ENCODE measurements at regions of chr15 and their contacts with region 1.

Region 1: GRCh38 chr15:77543159-77543882 is 89.4 kb downstream of the LINGO1 start:
- DNase-seq: peak; percentile 79
- H3K4me3 Mint-ChIP-seq: peak overlapping the region; percentile 66
- H3K27ac Mint-ChIP-seq: no peak overlapping the region
- H3K4me1 Mint-ChIP-seq: peaks cover 8% of the 10 kb centered on the region
- H3K27me3 Mint-ChIP-seq: no peaks in the 10 kb centered on the region

Region 2: GRCh38 chr15:77107531-77108355 is 435.6 kb before region 1 on chr15:
- CTCF ChIA-PET with region 1: interaction called, 30 read pairs
- POLR2A ChIA-PET with region 1: no interaction called
- DNase-seq: peak; percentile 56
- H3K4me3 Mint-ChIP-seq: no peak overlapping the region
- H3K27ac Mint-ChIP-seq: no peak overlapping the region
- H3K4me1 Mint-ChIP-seq: no peaks in the 10 kb centered on the region
- H3K27me3 Mint-ChIP-seq: no peaks in the 10 kb centered on the region

Region 3: DNA sequence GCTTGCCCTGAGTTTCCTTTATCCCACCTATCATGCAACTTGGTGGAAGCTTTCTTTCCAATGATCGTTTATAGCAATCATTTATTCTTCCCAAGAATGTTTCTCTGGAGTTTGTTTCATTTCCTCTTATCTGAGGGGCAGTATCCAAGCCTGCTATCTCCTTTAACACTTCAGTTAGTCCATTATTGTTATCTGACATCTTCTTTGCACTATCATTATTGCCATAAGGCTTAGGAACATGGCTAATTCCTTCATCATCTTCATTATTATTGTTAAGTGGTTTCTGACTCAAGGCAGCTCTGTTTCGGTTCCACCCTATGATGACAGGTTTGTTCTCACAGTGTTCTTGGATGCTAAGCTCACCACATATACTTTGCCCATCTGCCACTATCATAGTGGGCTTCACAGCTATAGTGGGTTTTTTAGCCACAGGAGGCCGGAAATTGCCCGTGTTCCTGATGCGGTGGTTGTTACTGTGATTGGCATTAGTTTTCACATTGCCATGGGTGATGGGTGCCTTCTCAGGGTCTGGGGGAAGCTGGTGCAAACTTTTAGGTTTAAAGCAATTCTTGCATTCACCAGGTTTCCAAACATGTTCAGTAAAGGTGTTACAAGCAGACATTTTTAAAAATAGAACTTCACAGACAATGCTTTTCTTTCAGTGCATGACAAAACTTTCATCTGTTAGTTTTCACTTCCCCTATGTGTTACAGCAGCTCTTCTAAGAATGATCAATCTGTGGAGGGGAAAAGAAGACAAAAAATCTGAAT is 361.8 kb before region 1 on chr15:
- CTCF ChIA-PET with region 1: interaction called, 38 read pairs
- POLR2A ChIA-PET with region 1: no interaction called
- DNase-seq: no peak
- H3K4me3 Mint-ChIP-seq: no peak overlapping the region
- H3K27ac Mint-ChIP-seq: peak overlapping the region; percentile 4
- H3K4me1 Mint-ChIP-seq: peaks cover 53% of the 10 kb centered on the region
- H3K27me3 Mint-ChIP-seq: no peaks in the 10 kb centered on the region

Region 4: DNA sequence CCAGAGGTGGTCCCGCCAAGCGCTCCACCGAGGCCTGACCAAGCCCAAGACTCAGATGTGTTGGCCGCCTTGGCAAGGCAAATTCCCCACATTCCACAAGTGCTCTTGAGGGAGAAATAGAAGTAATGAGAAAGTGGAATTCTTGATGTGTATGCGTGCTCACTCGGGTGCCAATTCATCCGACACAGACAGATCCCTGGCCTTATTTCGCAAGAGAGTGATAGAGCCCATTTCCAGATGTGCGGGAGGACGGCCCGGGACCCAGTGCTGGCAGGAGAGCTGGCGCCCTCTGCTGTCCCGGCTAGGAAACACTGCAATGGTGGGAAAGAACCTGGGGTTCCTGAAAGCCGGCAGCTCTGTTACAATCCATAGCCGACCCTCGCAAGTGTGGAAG is 46.6 kb before region 1 on chr15:
- CTCF ChIA-PET with region 1: interaction called, 19 read pairs
- POLR2A ChIA-PET with region 1: no interaction called
- DNase-seq: peak; percentile 71
- H3K4me3 Mint-ChIP-seq: no peak overlapping the region
- H3K27ac Mint-ChIP-seq: no peak overlapping the region
- H3K4me1 Mint-ChIP-seq: peaks cover 17% of the 10 kb centered on the region
- H3K27me3 Mint-ChIP-seq: no peaks in the 10 kb centered on the region

Region 5: GRCh38 chr15:77531146-77531962 is 12.0 kb before region 1 on chr15:
- CTCF ChIA-PET with region 1: interaction called, 13 read pairs
- POLR2A ChIA-PET with region 1: interaction called, 3 read pairs
- DNase-seq: no peak
- H3K4me3 Mint-ChIP-seq: no peak overlapping the region
- H3K27ac Mint-ChIP-seq: no peak overlapping the region
- H3K4me1 Mint-ChIP-seq: no peaks in the 10 kb centered on the region
- H3K27me3 Mint-ChIP-seq: peaks cover 12% of the 10 kb centered on the region

Measured in activated CD4-positive, alpha-beta memory T cell treated with anti-CD3 and anti-CD28 coated beads, Interleukin-2, amount 10 ng/mL, durations not matched to agents 7 days and 5 days (primary cell).